ENCODE measurements at regions of chr1 and their contacts with region 1.

Region 1: GRCh38 chr1:116299248-116299915 is 73.7 kb upstream of the ATP1A1 start:
- DNase-seq: no peak
- ATAC-seq: no peak
- H3K4me3 ChIP-seq: no peak overlapping the region
- H3K4me3 Mint-ChIP-seq: no peak overlapping the region
- H3K27ac ChIP-seq: no peak overlapping the region
- H3K27ac Mint-ChIP-seq: no peak overlapping the region
- H3K4me1 ChIP-seq: no peaks in the 10 kb centered on the region
- H3K4me1 Mint-ChIP-seq: peaks cover 6% of the 10 kb centered on the region
- H3K27me3 ChIP-seq: no peaks in the 10 kb centered on the region
- H3K27me3 Mint-ChIP-seq: no peaks in the 10 kb centered on the region
- CTCF ChIP-seq: no peak

Region 2: DNA sequence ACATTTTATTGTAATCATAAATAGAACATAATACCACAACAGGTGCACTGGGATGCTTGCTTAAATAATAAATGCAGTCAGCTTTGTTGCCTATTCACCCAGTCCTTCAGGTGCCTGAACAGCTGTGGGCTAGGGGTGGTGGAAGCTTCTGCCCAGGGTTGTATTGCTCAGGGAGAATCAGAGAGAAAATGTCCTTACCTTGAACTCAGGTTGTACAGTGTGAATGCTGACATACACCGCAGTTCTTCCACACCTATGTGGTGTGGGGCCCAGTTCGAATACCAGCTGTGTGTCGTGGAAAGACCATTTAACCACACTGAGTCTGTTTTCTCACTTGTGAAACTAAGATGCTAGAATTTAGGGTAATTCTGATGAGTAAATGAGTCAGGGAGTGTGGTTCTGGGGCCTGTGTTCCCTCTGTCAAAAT is 42.0 kb before region 1 on chr1:
- CTCF ChIA-PET with region 1: no interaction called
- POLR2A ChIA-PET with region 1: no interaction called
- intact Hi-C with region 1: no loop called
- DNase-seq: no peak
- ATAC-seq: no peak
- H3K4me3 ChIP-seq: no peak overlapping the region
- H3K4me3 Mint-ChIP-seq: no peak overlapping the region
- H3K27ac ChIP-seq: no peak overlapping the region
- H3K27ac Mint-ChIP-seq: no peak overlapping the region
- H3K4me1 ChIP-seq: peaks cover 6% of the 10 kb centered on the region
- H3K4me1 Mint-ChIP-seq: peaks cover 27% of the 10 kb centered on the region
- H3K27me3 ChIP-seq: no peaks in the 10 kb centered on the region
- H3K27me3 Mint-ChIP-seq: no peaks in the 10 kb centered on the region
- CTCF ChIP-seq: no peak

Region 3: DNA sequence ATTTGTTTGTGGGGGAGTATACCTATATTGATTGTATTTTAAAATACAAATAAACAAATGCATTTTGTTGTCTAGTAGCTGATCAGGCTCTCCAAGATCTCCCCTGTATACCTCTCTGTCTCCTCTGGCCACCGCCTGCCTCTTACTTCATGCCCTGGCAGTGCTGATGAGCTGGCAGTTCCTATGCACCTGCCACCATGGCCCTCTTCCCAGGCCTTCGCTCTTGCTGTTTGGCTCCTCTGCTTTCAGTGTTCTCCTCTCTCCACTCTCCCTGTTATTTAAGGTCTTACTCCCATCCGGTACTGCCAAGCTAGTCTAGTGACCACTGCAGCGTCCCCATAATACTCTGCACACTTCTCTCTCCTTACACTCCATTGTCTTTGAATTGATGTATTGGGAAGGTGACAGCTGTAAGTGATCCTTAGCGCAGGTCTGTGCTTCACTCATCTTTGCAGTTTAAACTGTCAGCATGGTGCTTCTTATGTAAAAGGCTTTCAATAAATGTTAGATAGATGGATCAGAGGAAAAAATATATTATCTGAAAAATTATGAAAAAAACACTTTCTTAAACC is 14.5 kb before region 1 on chr1:
- CTCF ChIA-PET with region 1: interaction called, 3 read pairs
- POLR2A ChIA-PET with region 1: no interaction called
- intact Hi-C with region 1: loop called in 1 of 2 experiments (anchors 2 kb)
- DNase-seq: no peak
- ATAC-seq: no peak
- H3K4me3 ChIP-seq: no peak overlapping the region
- H3K4me3 Mint-ChIP-seq: no peak overlapping the region
- H3K27ac ChIP-seq: no peak overlapping the region
- H3K27ac Mint-ChIP-seq: no peak overlapping the region
- H3K4me1 ChIP-seq: no peaks in the 10 kb centered on the region
- H3K4me1 Mint-ChIP-seq: peaks cover 24% of the 10 kb centered on the region
- H3K27me3 ChIP-seq: no peaks in the 10 kb centered on the region
- H3K27me3 Mint-ChIP-seq: no peaks in the 10 kb centered on the region
- CTCF ChIP-seq: no peak

Region 4: DNA sequence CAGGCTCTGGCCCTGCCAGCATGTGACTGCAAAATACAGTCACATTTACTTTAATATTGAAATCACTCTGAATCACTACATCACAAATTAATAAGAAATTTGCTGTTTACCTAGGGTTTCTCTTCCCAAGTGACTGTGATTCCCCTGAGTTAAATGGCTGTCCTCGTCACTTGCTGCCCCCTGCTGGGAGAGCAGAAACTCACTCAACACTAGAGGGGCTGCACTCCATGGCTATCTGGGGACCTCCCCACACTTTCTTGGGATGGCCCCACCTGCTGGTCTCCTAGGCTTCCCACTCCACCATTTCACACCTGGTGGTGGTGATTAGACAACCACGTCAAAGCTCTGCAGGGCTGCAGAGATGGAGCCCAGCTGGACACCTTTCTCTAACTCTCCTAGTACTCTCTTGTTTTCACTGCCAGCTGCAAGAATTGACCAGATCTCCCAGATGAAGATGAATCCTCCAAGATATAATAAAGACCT is 518.2 kb after region 1 on chr1:
- CTCF ChIA-PET with region 1: no interaction called
- POLR2A ChIA-PET with region 1: no interaction called
- intact Hi-C with region 1: no loop called
- DNase-seq: peak; percentile 50 to 89 (median 70)
- ATAC-seq: peak; percentile 63
- H3K4me3 ChIP-seq: no peak overlapping the region
- H3K4me3 Mint-ChIP-seq: peak overlapping the region; percentile 68
- H3K27ac ChIP-seq: no peak overlapping the region
- H3K27ac Mint-ChIP-seq: peak overlapping the region; percentile 95
- H3K4me1 ChIP-seq: peaks cover 23% of the 10 kb centered on the region
- H3K4me1 Mint-ChIP-seq: peaks cover 38% of the 10 kb centered on the region
- H3K27me3 ChIP-seq: no peaks in the 10 kb centered on the region
- H3K27me3 Mint-ChIP-seq: no peaks in the 10 kb centered on the region
- CTCF ChIP-seq: peak; percentile 94